HEK293 (cell line): ENCODE measurements at regions of chr9 and their contacts with region 1.

Region 1: GRCh38 chr9:130336885-130337284 is 71.3 kb downstream of the HMCN2 start:
- H3K4me3 ChIP-seq: no peak overlapping the region
- H3K27ac ChIP-seq: no peak overlapping the region
- H3K4me1 ChIP-seq: no peaks in the 10 kb centered on the region
- CTCF ChIP-seq: no peak

Region 2: GRCh38 chr9:130235897-130236668 is 100.8 kb before region 1 on chr9:
- CTCF ChIA-PET with region 1: interaction called, 20 read pairs
- POLR2A ChIA-PET with region 1: no interaction called
- H3K4me3 ChIP-seq: no peak overlapping the region
- H3K27ac ChIP-seq: no peak overlapping the region
- H3K4me1 ChIP-seq: no peaks in the 10 kb centered on the region
- CTCF ChIP-seq: peak; percentile 87

Region 3: DNA sequence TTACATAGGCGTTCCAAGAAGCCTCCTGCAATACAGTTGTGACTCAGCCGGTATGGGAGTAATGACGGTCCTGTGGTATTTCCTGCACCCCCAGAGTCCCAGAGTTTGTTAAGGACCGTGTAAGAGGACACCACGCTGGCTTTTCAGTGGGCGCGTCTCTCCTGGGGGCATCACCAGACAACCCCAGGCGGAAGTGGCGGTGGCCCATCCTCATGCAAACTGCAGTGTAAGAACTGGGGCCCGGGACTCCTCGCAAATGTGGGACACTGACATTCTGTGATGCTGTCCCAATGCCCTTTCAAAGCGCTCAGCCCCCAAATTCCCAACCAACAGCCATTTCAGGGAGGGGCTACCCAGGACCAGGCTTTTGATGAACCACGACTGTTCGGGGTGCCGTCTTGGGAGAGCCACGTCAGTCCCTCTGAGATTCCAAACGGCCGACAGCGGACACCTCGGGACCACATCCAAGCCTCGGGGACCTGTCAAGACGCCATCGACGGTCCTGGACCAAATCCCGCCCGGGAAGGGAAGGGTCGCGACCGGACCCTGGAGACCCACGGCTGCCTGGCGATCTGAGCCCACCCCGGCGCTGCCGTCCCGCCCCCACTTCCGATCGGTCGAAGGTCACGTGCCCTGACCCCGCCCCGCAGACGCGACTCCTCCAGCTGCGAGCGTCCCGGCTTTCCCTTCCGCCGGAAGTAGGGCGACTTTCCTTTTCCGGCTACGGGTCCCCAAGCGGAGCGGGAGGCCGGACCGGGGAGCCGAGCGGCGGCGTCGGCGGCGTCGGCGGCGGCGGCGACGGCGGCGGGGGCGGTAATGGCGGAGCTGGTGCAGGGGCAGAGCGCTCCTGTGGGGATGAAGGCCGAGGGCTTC is 242.2 kb after region 1 on chr9 and contains the start of gene FUBP3:
- CTCF ChIA-PET with region 1: no interaction called
- POLR2A ChIA-PET with region 1: no interaction called
- H3K4me3 ChIP-seq: peak within 1 kb of the TSS; percentile 63
- H3K27ac ChIP-seq: peak within 1 kb of the TSS; percentile 53
- H3K4me1 ChIP-seq: no peaks in the 10 kb centered on the region
- CTCF ChIP-seq: no peak